ENCODE measurements at regions of chr1 and their contacts with region 1.

Region 1: GRCh38 chr1:42846257-42847110 is at the start of gene ZNF691:
- DNase-seq: peak; percentile 94
- ATAC-seq: peak; percentile 93
- H3K4me3 Mint-ChIP-seq: peak within 1 kb of the TSS; percentile 97
- H3K27ac Mint-ChIP-seq: peak within 1 kb of the TSS; percentile 89
- H3K4me1 Mint-ChIP-seq: peaks cover 34% of the 10 kb centered on the region
- H3K27me3 Mint-ChIP-seq: no peaks in the 10 kb centered on the region
- total RNA-seq, gene ZNF691: 10.5 to 11.7 TPM

Region 2: DNA sequence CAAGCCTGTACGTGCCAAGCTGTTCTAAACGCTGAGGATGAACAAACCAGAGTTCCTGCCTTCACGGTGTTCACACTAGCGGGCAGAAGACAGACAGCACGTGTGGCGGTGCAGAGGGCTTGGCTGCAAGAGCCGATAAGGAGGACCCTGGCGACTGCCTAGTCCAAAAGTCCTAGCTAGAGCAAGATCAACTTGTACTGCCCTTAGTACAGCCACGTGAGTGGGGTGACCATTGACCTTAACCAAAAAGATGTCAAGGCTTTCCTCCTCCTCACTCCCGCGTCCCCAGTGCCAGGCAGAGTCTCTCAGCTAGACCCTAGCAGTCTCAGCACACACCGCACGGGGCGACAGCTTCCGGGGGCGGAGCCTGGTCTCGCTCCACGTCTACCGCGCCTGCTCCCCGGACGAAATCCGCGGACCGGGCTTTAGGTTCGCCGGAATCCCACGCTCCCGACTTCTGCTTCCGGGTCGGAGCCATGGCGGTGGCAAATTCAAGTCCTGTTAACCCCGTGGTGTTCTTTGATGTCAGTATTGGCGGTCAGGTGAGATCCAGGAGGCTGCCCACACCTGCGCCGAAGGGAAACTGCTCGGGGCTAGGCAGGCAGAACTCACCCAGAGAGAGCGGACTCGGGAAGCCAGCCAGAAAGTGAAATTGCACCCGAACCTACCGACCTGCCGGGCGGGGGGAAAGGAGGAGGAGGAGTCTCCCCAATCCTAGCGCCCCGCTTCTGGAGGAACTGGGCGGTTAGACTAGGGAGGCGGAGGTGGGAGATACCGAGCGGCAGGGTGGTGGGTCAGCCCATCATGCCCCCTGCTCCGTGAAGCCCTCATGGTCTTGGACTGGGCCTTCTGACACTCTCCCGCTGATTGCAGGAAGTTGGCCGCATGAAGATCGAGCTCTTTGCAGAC is 188.3 kb before region 1 on chr1 and contains the start of gene PPIH:
- CTCF ChIA-PET with region 1: no interaction called
- POLR2A ChIA-PET with region 1: no interaction called
- intact Hi-C with region 1: loop called in 1 of 2 experiments (anchors 1 kb)
- DNase-seq: peak; percentile 98
- ATAC-seq: peak; percentile 97
- H3K4me3 Mint-ChIP-seq: peak within 1 kb of the TSS; percentile 97
- H3K27ac Mint-ChIP-seq: peak within 1 kb of the TSS; percentile 97
- H3K4me1 Mint-ChIP-seq: peaks cover 39% of the 10 kb centered on the region
- H3K27me3 Mint-ChIP-seq: no peaks in the 10 kb centered on the region
- total RNA-seq, gene PPIH: 111 to 114 TPM

Region 3: DNA sequence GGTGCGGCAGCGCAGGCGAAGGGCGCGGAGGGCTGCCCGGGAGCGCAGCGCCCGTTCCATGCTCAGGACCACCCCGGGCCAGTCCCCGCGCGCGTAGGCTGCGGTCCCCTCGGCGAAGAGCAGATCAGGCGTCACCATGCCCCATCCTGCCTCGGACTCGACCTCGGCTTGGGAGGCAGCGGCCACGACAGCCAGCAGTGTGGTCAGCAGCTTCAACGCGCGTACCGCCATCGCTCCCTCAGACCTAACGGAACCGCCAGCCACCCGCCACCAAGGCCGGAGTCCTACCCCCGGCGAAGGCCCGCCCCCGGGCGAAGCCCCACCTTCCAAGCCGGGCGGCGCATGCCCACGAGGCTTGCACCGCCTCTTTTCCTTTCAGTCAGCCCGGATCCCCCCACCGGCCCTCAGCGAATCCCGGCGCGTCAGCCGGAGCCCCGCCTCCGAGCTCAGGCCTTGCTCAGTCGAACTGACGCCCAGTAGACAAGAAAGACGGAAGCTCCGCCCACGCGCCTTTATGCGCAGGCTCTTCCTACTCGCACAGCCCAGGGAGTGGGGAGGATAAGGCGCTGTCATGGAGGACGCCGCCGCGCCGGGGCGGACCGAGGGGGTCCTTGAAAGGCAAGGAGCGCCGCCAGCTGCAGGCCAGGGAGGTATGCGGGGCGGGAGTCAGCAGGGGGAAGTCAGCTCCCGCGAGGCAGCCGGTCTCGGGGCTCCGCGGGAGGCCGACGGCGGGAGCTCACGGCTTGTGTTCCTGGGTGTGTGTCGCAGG is 79.6 kb before region 1 on chr1 and contains the starts of genes C1orf50 and P3H1:
- CTCF ChIA-PET with region 1: interaction called, 12 read pairs
- POLR2A ChIA-PET with region 1: interaction called, 7 read pairs
- intact Hi-C with region 1: loop called in 1 of 2 experiments (anchors 1 kb)
- DNase-seq: peak; percentile 100
- ATAC-seq: peak; percentile 96
- H3K4me3 Mint-ChIP-seq: no peak within 1 kb of the TSS
- H3K27ac Mint-ChIP-seq: peak within 1 kb of the TSS; percentile 85
- H3K4me1 Mint-ChIP-seq: peaks cover 36% of the 10 kb centered on the region
- H3K27me3 Mint-ChIP-seq: no peaks in the 10 kb centered on the region
- total RNA-seq, gene C1orf50: 4.0 to 8.0 TPM
- total RNA-seq, gene P3H1: 24.3 to 28.8 TPM

Region 4: DNA sequence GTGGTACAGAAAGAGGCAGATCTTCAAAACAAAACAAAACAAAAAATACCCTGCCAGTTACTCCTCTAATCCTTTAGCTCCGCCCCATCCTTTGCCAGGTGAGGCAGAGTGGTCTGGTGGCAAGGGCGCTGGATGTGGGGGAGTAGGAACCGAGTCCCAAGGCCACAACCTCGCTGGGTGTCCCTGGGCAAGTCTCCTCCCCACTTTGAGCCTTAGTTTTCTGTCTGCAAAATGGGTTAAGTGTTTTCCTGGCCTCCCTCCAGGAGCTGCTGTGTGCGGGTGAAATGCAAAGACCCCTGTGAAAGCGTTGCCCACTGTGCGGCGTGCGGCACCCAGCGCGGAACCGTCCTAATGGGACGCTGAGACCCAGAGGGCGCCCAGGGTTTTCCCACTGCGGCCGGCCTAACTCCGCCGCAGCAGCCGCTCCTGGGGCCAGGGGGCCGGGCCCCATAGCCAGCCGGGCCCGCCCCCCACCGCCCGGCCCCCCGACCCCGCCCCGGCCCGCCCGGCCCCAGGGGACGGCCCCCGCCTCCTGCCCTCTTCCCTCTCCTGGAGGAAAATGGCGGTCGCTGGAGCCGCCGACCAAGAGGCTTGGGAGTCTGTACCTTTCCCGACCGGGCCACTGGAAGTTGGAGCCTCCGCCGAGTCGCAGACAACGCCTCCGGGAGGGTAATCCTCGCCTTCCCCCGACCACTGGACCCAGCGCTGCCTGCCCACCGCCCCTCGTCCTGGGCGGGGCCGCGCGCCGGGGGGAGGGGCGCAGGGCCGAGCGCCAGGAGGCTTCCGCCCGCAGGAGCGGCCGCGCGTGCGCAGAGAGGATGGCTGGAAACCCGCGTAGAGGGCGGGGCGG is 29.7 kb before region 1 on chr1 and contains the starts of genes ERMAP and SVBP:
- CTCF ChIA-PET with region 1: interaction called, 27 read pairs
- POLR2A ChIA-PET with region 1: interaction called, 12 read pairs
- intact Hi-C with region 1: loop called (anchors 1 kb)
- DNase-seq: peak; percentile 98
- ATAC-seq: peak; percentile 90
- H3K4me3 Mint-ChIP-seq: peak within 1 kb of the TSS; percentile 77
- H3K27ac Mint-ChIP-seq: peak within 1 kb of the TSS; percentile 84
- H3K4me1 Mint-ChIP-seq: peaks cover 16% of the 10 kb centered on the region
- H3K27me3 Mint-ChIP-seq: peaks cover 2% of the 10 kb centered on the region
- total RNA-seq, gene ERMAP: 4.5 to 6.4 TPM
- total RNA-seq, gene SVBP: 14.5 to 14.6 TPM

Region 5: DNA sequence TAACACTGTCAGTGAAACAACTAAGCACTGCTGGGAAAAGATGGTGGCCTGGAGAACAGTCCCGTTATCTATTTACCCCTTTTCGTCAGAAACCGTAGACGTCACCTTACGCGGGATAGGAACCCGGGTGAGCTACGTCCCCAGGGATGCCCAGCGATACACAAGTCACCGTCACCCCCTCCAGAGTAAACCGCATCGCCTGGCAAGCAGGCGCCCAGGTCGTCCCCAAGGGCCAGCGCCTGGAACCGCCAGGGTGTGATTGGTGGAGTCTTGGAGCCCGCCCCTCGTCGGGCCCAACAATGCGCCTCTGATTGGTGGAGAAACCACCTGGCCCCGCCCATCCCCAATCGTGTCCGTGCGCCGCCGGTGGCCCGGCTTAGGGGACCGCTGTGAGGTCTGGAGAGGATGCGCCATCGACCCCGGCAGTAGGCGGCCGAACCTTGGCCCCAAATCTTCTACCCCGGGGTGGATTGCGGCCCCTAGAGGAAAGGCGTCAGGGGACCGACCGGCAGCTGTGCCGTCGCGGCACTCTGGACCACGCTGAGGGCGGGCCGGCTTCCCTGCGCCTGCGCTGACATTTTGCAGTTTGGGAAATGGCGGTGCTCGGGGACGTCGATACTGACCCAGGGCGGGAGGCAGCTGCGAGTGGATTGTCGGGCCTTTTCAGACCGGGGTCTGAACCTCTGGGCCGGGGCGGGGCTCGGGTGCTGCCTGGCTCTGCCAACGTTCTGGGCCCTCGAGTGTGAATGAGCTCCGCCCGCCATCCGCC is 77.8 kb after region 1 on chr1:
- CTCF ChIA-PET with region 1: interaction called, 4 read pairs
- POLR2A ChIA-PET with region 1: interaction called, 3 read pairs
- intact Hi-C with region 1: loop called in 1 of 2 experiments (anchors 1 kb)
- DNase-seq: peak; percentile 95
- ATAC-seq: peak; percentile 87
- H3K4me3 Mint-ChIP-seq: peak overlapping the region; percentile 87
- H3K27ac Mint-ChIP-seq: peak overlapping the region; percentile 95
- H3K4me1 Mint-ChIP-seq: peaks cover 32% of the 10 kb centered on the region
- H3K27me3 Mint-ChIP-seq: no peaks in the 10 kb centered on the region

Region 6: DNA sequence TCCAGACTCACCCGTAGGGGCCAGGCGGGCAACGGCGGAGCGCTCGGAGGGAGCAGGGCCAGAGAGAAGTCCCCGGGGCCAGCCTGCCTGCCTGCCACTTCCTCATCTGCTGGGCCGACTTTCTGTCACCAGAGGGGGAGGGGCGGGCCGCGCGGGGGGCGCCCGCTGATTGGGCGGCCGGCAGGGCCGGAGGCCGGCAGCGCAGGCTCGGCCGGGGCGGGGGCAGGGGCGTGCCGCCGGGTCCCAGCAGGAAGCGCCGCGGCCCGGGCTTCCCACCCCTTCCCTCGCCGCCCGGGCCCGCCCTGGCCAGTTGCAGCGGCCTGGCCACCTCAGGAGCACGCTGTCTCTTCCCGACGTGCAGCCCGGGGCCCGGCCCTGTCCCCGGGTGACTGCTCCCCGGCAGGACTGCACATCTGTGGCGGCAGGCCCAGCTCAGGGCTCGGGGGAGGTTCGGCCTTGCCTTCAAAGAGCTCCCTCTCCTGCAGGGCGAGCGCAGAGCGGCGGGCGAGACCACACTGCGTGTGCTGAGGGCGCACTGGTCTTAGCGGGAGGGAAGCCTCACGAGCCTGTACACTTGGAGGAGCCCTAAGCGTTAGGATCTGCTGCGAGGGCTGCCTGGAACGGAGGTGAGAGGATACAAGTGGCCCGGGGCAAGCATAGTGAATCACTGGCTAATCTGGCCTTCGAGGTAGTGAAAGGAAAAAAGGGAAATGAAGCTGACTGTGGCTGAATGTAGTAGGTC is 521.6 kb after region 1 on chr1 and contains the start of gene ELOVL1:
- CTCF ChIA-PET with region 1: no interaction called
- POLR2A ChIA-PET with region 1: no interaction called
- intact Hi-C with region 1: loop called in 1 of 2 experiments (anchors 5 kb)
- DNase-seq: peak; percentile 94
- ATAC-seq: peak; percentile 83
- H3K4me3 Mint-ChIP-seq: peak within 1 kb of the TSS; percentile 90
- H3K27ac Mint-ChIP-seq: peak within 1 kb of the TSS; percentile 93
- H3K4me1 Mint-ChIP-seq: peaks cover 30% of the 10 kb centered on the region
- H3K27me3 Mint-ChIP-seq: no peaks in the 10 kb centered on the region
- total RNA-seq, gene ELOVL1: 56.0 to 72.1 TPM

Region 7: GRCh38 chr1:44354840-44355581 is 1508.5 kb after region 1 on chr1 and contains the start of gene ERI3:
- CTCF ChIA-PET with region 1: no interaction called
- POLR2A ChIA-PET with region 1: no interaction called
- intact Hi-C with region 1: loop called in 1 of 2 experiments (anchors 10 kb)
- DNase-seq: peak; percentile 98
- ATAC-seq: peak; percentile 100
- H3K4me3 Mint-ChIP-seq: peak within 1 kb of the TSS; percentile 90
- H3K27ac Mint-ChIP-seq: peak within 1 kb of the TSS; percentile 82
- H3K4me1 Mint-ChIP-seq: peaks cover 34% of the 10 kb centered on the region
- H3K27me3 Mint-ChIP-seq: no peaks in the 10 kb centered on the region
- total RNA-seq, gene ERI3: 36.7 to 41.3 TPM